Activated CD8-positive, alpha-beta T cell treated with anti-CD3 and anti-CD28 coated beads for 36 hours (primary cell): ENCODE measurements at regions of chr7 and their contacts with region 1.

Region 1: DNA sequence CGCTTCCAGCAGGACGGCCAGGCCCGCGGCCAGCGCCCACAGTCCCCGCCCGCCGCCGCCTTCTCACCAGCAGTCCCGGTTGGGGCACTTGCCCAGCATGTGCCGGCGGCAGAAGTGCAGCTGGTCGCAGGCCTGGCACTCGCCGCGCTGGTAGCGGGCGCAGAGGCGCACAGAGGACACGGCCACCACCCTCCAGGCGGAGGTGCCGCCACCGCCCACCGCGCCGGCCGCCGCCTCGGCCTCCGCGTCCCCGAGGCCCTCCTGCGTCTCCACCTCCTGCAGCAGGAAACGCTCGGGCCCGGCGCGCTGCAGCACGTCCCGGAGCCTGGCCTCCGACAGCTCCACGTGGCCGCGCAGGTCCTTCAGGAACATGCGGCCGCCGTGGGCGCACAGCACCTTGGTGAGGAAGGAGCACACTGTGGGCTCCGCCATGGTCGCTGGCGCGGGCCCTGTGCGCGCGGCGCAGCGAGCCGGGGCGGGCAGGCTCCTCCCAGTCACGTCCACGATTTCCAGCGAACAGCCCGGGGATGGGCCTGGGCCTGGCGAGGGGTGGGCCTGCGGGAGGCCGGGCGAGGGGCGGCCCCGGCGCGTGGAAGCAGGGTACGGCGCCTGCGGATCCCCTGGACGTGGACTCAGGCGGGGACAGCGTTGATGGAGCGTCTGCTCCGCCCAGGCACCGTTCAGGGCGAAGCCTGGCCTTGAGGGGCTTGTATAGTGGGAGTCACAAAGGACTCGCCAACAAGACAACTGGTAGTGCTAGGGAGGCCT is at the start of gene ZC3HAV1L:
- DNase-seq: peak; percentile 75
- ATAC-seq: peak; percentile 88
- H3K4me3 Mint-ChIP-seq: peak within 1 kb of the TSS; percentile 82
- H3K27ac Mint-ChIP-seq: peak within 1 kb of the TSS; percentile 88
- H3K4me1 Mint-ChIP-seq: peaks cover 19% of the 10 kb centered on the region
- H3K27me3 Mint-ChIP-seq: no peaks in the 10 kb centered on the region
- CTCF ChIP-seq: no peak
- total RNA-seq, gene ZC3HAV1L: 19.9 TPM

Region 2: DNA sequence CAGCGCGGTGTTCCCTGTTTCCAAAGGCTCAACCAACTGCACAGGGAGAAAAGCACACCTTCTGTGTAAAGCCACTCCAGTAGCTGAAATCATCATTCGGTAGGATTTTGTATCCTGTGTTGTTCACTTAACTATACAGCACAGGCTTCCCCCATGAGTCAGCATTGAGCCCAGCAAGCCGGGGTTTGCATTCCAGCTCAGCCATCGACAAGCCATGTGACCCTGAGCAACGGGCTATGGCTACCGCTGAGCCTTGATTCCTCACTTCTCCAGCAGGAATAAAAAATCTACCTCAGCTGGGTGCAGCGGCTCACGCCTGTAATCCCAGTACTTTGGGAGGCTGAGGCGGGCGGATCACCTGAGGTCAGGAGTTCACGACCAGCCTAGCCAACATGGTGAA is 193.7 kb before region 1 on chr7:
- CTCF ChIA-PET with region 1: no interaction called
- POLR2A ChIA-PET with region 1: no interaction called
- intact Hi-C with region 1: no loop called
- DNase-seq: no peak
- ATAC-seq: no peak
- H3K4me3 Mint-ChIP-seq: no peak overlapping the region
- H3K27ac Mint-ChIP-seq: no peak overlapping the region
- H3K4me1 Mint-ChIP-seq: no peaks in the 10 kb centered on the region
- H3K27me3 Mint-ChIP-seq: no peaks in the 10 kb centered on the region
- CTCF ChIP-seq: no peak

Region 3: DNA sequence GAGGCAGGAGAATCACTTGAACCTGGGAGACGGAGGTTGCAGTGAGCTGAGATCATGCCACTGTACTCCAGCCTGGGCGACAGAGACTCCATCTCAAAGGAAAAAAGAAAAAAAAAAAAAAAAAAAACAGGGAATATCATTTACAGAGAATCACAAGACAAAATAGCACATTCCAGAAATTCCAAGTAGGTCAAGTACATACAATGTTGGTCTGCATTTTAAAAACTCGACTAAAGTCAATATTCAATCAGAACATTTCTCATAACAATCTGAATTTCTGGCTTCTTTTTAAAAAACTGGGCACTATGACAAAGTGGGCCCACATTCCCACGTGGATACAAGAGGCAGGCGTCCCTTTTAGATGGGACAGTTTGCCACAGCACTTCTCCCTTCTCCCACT is 12.7 kb before region 1 on chr7:
- CTCF ChIA-PET with region 1: interaction called, 9 read pairs
- POLR2A ChIA-PET with region 1: interaction called, 10 read pairs
- intact Hi-C with region 1: no loop called
- DNase-seq: no peak
- ATAC-seq: no peak
- H3K4me3 Mint-ChIP-seq: no peak overlapping the region
- H3K27ac Mint-ChIP-seq: no peak overlapping the region
- H3K4me1 Mint-ChIP-seq: no peaks in the 10 kb centered on the region
- H3K27me3 Mint-ChIP-seq: no peaks in the 10 kb centered on the region
- CTCF ChIP-seq: no peak